Activated CD8-positive, alpha-beta memory T cell treated with anti-CD3 and anti-CD28 coated beads, Interleukin-2, amount 10 ng/mL, durations not matched to agents 7 days and 5 days (primary cell): ENCODE measurements at regions of chr16 and their contacts with region 1.

Region 1: GRCh38 chr16:117379-118365 is 20.8 kb downstream of the NPRL3 start:
- DNase-seq: peak; percentile 69
- ATAC-seq: peak; percentile 80
- H3K4me3 Mint-ChIP-seq: no peak overlapping the region
- H3K27ac Mint-ChIP-seq: no peak overlapping the region
- H3K4me1 Mint-ChIP-seq: peaks cover 12% of the 10 kb centered on the region
- H3K27me3 Mint-ChIP-seq: no peaks in the 10 kb centered on the region

Region 2: DNA sequence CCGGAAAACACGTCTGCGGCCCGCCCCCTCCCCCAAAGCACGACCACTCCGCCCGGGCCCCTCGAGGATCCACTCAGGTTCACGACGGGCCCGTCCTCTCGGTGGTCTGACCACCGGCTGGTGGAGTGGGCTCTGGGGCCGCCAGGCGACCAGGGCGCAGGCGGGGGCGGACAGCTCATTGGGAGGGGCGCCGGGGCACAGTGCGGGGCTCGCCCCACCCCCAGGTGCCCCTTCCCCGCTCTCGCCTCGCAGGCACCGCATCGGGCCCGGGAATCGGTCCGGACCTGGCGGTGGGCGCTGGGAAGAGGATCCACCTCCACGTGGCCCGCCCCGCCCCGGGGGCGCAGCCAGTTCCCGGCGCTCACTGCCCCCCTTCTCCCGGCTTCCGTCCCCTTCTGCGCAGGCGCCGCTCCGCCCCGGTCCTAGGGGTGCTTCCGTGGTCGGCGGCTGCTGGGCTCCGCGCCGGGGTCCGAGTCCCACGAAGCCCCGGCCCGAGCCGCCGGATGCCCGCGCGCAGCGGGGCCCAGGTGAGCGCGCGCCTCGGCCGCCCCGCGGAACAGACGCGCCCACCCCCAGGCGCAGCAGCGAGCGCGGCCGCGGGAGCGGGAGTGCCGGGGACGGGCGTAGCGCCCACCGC is 39.7 kb before region 1 on chr16 and contains the start of gene MPG:
- CTCF ChIA-PET with region 1: no interaction called
- DNase-seq: peak; percentile 88
- ATAC-seq: peak; percentile 85
- H3K4me3 Mint-ChIP-seq: peak within 1 kb of the TSS; percentile 86
- H3K27ac Mint-ChIP-seq: peak within 1 kb of the TSS; percentile 86
- H3K4me1 Mint-ChIP-seq: peaks cover 28% of the 10 kb centered on the region
- H3K27me3 Mint-ChIP-seq: peaks cover 19% of the 10 kb centered on the region
- total RNA-seq, gene MPG: 60.2 to 60.6 TPM

Region 3: GRCh38 chr16:180938-181667 is 63.4 kb after region 1 on chr16:
- CTCF ChIA-PET with region 1: interaction called, 15 read pairs
- DNase-seq: peak; percentile 85
- ATAC-seq: peak; percentile 86
- H3K4me3 Mint-ChIP-seq: no peak overlapping the region
- H3K27ac Mint-ChIP-seq: no peak overlapping the region
- H3K4me1 Mint-ChIP-seq: peaks cover 7% of the 10 kb centered on the region
- H3K27me3 Mint-ChIP-seq: peaks cover 30% of the 10 kb centered on the region

Region 4: DNA sequence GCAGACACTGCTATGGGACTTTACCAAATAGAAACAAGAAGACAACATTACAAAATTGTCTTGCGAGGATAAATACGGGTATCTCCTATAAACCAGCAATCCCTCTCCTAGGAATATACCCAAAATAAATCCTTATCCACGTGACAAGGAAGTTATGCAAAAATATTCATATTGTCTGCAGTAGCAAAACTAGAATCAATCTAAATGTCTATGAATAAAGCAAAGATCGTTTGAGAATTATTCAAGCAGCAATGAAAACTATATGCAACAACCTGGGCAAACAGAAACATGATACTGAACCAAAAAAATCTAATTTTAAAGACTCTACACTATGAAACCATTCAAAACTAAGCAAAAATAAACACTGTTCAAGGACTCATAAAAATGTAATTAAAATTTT is 102.3 kb after region 1 on chr16:
- CTCF ChIA-PET with region 1: no interaction called
- DNase-seq: no peak
- ATAC-seq: no peak
- H3K4me3 Mint-ChIP-seq: no peak overlapping the region
- H3K27ac Mint-ChIP-seq: no peak overlapping the region
- H3K4me1 Mint-ChIP-seq: peaks cover 4% of the 10 kb centered on the region
- H3K27me3 Mint-ChIP-seq: no peaks in the 10 kb centered on the region